ENCODE measurements at regions of chr15 and their contacts with region 1.

Region 1: GRCh38 chr15:36798366-36798765 is 218.9 kb downstream of the CDIN1 start:
- DNase-seq: no peak
- H3K4me3 ChIP-seq: no peak overlapping the region
- H3K27ac ChIP-seq: no peak overlapping the region
- H3K4me1 ChIP-seq: peaks cover 0 to 12% (median 5%) of the 10 kb centered on the region in 4 donors
- H3K27me3 ChIP-seq: no peaks in the 10 kb centered on the region
- CTCF ChIP-seq: no peak
- EP300 ChIP-seq: no peak
- POLR2A ChIP-seq: no peak

Region 2: DNA sequence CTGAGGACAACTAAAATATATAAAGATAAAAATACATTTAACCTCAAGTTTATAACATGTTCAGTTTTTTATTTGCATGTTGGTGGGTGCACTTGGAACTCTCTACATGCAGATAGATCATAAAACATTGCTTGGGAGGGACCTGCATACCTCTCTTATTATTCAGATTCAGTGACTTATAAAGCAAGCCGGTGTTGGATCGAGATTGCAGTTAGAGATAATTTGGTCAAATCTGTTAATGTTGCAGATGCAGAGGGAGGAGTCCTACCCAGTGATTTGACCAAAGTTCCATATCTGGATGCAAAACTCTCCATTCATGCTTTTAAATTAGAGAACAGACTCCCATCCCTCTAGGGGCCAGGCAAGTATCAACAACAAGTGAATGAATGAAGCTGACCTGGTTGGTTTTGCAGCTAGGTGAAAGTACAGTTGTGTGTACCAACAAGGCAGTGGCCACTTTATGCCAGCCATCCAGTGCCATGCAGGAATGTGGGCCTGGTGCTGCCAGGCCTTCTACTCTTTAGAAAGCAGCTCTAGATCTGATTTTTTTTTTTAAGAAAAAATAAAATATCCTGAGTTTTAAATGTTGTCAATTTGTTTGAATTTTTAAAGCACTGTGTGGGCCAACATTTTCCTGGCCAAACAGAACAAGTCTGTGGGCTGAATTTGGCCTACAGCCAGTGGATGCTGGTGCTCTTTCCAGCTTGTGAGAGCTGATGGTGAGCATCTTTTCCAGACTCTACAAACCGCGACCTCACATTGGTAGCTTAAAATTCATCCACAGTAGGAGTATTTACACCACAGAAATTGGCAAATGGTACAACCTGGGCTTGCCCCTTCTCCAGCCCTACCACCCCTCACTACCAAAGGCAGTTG is 206.6 kb before region 1 on chr15:
- intact Hi-C with region 1: loop called (anchors 10 kb)
- DNase-seq: no peak
- H3K4me3 ChIP-seq: no peak overlapping the region
- H3K27ac ChIP-seq: no peak overlapping the region
- H3K4me1 ChIP-seq: peaks cover 0 to 41% (median 17%) of the 10 kb centered on the region in 4 donors
- H3K27me3 ChIP-seq: no peaks in the 10 kb centered on the region
- CTCF ChIP-seq: no peak
- EP300 ChIP-seq: no peak
- POLR2A ChIP-seq: no peak

Region 3: DNA sequence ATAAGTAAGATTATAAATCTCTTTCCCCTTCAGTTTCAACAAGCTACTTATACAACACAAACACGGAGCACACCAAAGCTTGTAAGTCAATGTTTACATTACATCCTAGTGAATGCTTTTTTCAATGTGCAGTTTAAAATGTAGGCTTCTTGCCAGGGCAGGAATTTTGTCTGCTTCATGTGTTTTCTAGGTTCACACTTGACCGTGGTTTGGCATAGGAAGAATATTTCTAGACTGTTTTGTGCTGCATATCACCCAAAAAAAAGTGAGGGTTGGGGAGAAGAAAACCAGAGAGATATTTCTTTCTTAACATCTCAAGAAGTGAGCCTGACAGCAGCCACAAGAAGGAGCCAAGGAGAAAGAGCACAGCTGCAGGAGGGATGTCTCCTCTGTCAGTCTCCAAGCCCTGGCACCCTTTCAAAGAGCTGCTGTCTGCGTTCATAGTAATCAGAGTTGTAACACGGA is 46.2 kb after region 1 on chr15:
- intact Hi-C with region 1: no loop called
- DNase-seq: no peak
- H3K4me3 ChIP-seq: no peak overlapping the region
- H3K27ac ChIP-seq: no peak overlapping the region
- H3K4me1 ChIP-seq: peaks cover 0 to 10% (median 7%) of the 10 kb centered on the region in 4 donors
- H3K27me3 ChIP-seq: no peaks in the 10 kb centered on the region
- CTCF ChIP-seq: no peak
- EP300 ChIP-seq: no peak
- POLR2A ChIP-seq: no peak